ENCODE measurements at regions of chr17 and their contacts with region 1.

Region 1: GRCh38 chr17:72699545-72699944 is 392.9 kb downstream of the SLC39A11 start:
- DNase-seq: no peak
- ATAC-seq: no peak
- H3K4me3 ChIP-seq: no peak overlapping the region
- H3K27ac ChIP-seq: peak overlapping the region in 2 of 4 donors; percentile 2 to 9
- H3K4me1 ChIP-seq: no peaks in the 10 kb centered on the region
- H3K27me3 ChIP-seq: no peaks in the 10 kb centered on the region
- CTCF ChIP-seq: no peak
- POLR2A ChIP-seq: no peak

Region 2: GRCh38 chr17:72560303-72561247 is 139.0 kb before region 1 on chr17:
- intact Hi-C with region 1: loop called (anchors 10 kb)
- DNase-seq: peak; percentile 65 to 79 (median 74)
- ATAC-seq: peak; percentile 73
- H3K4me3 ChIP-seq: no peak overlapping the region
- H3K27ac ChIP-seq: peak overlapping the region in 1 of 4 donors; percentile 34
- H3K4me1 ChIP-seq: peaks cover 13% of the 10 kb centered on the region
- H3K27me3 ChIP-seq: no peaks in the 10 kb centered on the region
- CTCF ChIP-seq: peak; percentile 61 to 86 (median 83)
- POLR2A ChIP-seq: no peak

Measured in body of pancreas (tissue), 4 donors.